Heart right ventricle (tissue), 16 donors: ENCODE measurements at regions of chr6 and their contacts with region 1.

Region 1: GRCh38 chr6:27479319-27480182 is 6.6 kb upstream of the ZNF184 start:
- DNase-seq: peak; percentile 76 to 79
- ATAC-seq: peak; percentile 93 to 97 (median 95)
- H3K4me3 ChIP-seq: peak overlapping the region; percentile 51 to 85 (median 72)
- H3K27ac ChIP-seq: peak overlapping the region; percentile 86 to 97 (median 96)
- H3K4me1 ChIP-seq: peaks cover 0 to 21% (median 8%) of the 10 kb centered on the region in 9 donors
- H3K27me3 ChIP-seq: no peaks in the 10 kb centered on the region
- CTCF ChIP-seq: no peak

Region 2: GRCh38 chr6:27177485-27178406 is 301.8 kb before region 1 on chr6:
- intact Hi-C with region 1: loop called in 5 of 10 experiments (anchors 2 to 10 kb)
- DNase-seq: peak; percentile 62 to 65
- ATAC-seq: peak; percentile 73 to 94 (median 86)
- H3K4me3 ChIP-seq: peak overlapping the region; percentile 73 to 100 (median 87)
- H3K27ac ChIP-seq: peak overlapping the region in 9 of 10 donors; percentile 23 to 84 (median 61)
- H3K4me1 ChIP-seq: peaks cover 0 to 20% (median 7%) of the 10 kb centered on the region in 9 donors
- H3K27me3 ChIP-seq: peaks cover 0 to 16% (median 8%) of the 10 kb centered on the region in 7 donors
- CTCF ChIP-seq: peak in 7 of 9 donors; percentile 19 to 62 (median 48)

Region 3: DNA sequence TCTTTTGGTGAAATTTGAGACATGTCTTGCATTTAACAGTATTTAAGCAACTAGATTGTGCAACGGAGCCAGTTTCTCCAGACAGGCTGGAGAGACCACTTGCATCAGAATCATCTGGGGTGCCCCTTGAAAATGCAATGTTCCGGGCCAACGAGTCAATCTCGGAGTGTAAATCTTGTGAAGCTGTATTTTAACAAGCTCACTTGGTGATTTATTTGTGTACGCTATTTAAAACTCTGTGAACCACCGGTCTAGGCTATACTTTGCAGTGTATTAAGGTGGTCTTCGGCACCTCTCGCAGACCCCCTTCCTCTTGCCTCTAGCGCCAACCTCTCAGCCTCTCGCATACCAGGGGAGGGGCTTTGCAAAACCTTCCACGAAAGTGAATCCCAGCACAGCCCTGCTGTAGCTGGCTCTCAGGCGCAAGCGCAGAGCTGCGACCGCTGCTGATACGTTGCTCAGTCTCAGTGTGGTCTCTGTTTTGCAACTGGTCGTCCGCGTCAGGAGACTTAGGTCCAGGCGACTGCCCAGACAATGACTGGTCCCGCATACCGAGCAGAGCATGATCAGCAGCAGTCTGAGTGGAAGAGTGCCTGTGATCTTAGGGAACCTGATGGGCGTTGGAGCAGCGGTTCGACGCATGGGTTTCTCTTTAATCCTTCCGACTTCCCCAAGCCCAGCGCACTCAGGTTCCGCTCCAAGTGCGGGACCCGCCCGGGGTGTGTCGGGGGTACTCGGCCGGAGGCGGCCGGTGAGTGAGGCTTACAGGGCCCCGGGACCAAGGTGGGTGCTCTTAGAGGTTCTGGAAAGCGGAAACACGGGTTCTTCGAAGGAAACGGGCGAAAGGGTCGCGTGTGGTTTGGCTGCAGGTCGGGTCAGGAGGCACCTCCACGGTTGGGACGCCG is 91.0 kb before region 1 on chr6 and contains the start of gene ZNF391:
- intact Hi-C with region 1: loop called in 3 of 10 experiments (anchors 2 to 5 kb)
- DNase-seq: peak; percentile 54 to 64
- ATAC-seq: peak; percentile 92 to 97 (median 96)
- H3K4me3 ChIP-seq: peak within 1 kb of the TSS; percentile 39 to 82 (median 62)
- H3K27ac ChIP-seq: peak within 1 kb of the TSS; percentile 5 to 86 (median 64)
- H3K4me1 ChIP-seq: peaks cover 0 to 15% (median 8%) of the 10 kb centered on the region in 9 donors
- H3K27me3 ChIP-seq: peaks cover 0 to 14% (median 0%) of the 10 kb centered on the region in 7 donors
- CTCF ChIP-seq: no peak
- total RNA-seq, gene ZNF391: 0.79 to 1.8 (median 1.3) TPM

Region 4: DNA sequence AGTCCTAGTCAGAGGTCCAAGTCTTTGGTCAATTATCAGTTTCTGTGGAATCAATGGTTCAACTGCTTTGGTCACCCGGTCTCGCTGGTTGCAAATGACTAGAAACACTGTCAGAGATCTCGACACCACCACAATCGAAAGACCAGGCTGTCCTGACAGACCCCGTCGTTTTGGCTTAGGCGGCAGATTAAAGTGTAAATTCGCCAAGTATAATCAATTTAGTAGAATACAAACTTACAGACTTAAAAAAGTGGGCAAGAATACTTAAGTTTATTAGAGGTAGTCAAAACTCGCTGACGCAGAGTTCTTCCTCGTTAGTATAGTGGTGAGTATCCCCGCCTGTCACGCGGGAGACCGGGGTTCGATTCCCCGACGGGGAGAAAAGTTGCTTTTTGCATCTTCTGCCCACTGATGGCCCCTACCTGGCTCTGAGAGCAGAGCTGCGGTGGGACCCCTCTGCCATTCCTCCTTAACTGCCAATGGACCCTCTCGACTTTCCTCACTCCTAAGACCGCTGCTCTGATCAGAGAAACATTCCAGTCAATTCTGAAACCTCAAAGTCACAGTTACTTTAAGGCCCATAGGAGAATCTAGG is 24.0 kb after region 1 on chr6:
- intact Hi-C with region 1: loop called in 1 of 10 experiments (anchors 2 kb)
- DNase-seq: peak; percentile 54 to 64
- ATAC-seq: peak; percentile 76 to 91 (median 89)
- H3K4me3 ChIP-seq: peak overlapping the region; percentile 5 to 60 (median 51)
- H3K27ac ChIP-seq: no peak overlapping the region
- H3K4me1 ChIP-seq: peaks cover 0 to 17% (median 9%) of the 10 kb centered on the region in 9 donors
- H3K27me3 ChIP-seq: peaks cover 0 to 42% (median 18%) of the 10 kb centered on the region in 7 donors
- CTCF ChIP-seq: no peak